Colonic mucosa (tissue), 4 donors: ENCODE measurements at regions of chr12 and their contacts with region 1.

Region 1: DNA sequence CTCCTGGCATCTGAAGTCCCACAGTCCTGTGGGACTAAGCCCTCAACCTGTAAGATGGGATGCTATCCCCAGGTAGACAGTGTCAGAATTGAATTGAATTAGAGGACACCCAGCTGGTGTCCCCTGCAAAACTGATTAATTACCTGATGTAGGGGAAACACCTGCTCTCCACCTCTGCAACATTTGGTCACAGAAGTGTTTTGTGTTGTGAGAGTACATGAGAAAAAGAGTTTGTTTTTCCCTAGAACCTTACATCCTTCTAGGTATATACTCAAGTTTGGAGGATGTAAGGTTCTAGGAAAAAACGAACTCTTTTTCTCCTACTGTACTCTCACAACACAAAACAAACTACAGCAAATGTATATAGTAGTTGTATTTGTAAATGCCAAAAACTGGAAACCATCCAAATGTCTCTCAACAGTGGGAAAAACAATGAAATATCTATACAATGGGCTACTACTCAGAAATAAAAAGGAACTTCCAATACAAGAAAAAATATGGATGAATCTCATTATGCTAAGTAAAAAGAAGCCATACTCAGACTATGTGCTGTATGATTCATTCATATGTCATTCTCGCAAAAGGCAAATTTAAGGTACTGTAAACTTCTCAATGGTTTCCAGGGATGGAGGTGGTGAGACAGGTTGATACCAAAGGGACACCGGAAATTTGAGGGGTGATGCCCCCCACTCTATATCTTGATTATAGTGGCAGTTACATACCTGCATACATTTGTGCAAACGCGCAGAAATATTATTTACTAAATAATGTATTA is 160.7 kb downstream of the MED13L start:
- DNase-seq: no peak
- H3K4me3 ChIP-seq: no peak overlapping the region
- H3K27ac ChIP-seq: no peak overlapping the region
- H3K4me1 ChIP-seq: no peaks in the 10 kb centered on the region
- H3K27me3 ChIP-seq: no peaks in the 10 kb centered on the region
- CTCF ChIP-seq: no peak

Region 2: GRCh38 chr12:116210131-116210530 is 93.3 kb after region 1 on chr12:
- intact Hi-C with region 1: loop called (anchors 10 kb)
- DNase-seq: no peak
- H3K4me3 ChIP-seq: no peak overlapping the region
- H3K27ac ChIP-seq: no peak overlapping the region
- H3K4me1 ChIP-seq: no peaks in the 10 kb centered on the region
- H3K27me3 ChIP-seq: no peaks in the 10 kb centered on the region
- CTCF ChIP-seq: no peak

Region 3: GRCh38 chr12:116492703-116493324 is 376.0 kb after region 1 on chr12:
- intact Hi-C with region 1: no loop called
- DNase-seq: no peak
- H3K4me3 ChIP-seq: no peak overlapping the region
- H3K27ac ChIP-seq: no peak overlapping the region
- H3K4me1 ChIP-seq: no peaks in the 10 kb centered on the region
- H3K27me3 ChIP-seq: no peaks in the 10 kb centered on the region
- CTCF ChIP-seq: no peak